Activated CD8-positive, alpha-beta T cell treated with anti-CD3 and anti-CD28 coated beads, Interleukin-2, amount 10 ng/mL, durations not matched to agents 7 days and 5 days (primary cell): ENCODE measurements at regions of chr11 and their contacts with region 1.

Region 1: GRCh38 chr11:45102810-45103621 is 43.4 kb upstream of the PRDM11 start:
- DNase-seq: peak; percentile 74
- ATAC-seq: peak; percentile 96
- H3K4me3 Mint-ChIP-seq: peak overlapping the region; percentile 62
- H3K27ac Mint-ChIP-seq: peak overlapping the region; percentile 84
- H3K4me1 Mint-ChIP-seq: peaks cover 11% of the 10 kb centered on the region
- H3K27me3 Mint-ChIP-seq: peaks cover 25% of the 10 kb centered on the region

Region 2: DNA sequence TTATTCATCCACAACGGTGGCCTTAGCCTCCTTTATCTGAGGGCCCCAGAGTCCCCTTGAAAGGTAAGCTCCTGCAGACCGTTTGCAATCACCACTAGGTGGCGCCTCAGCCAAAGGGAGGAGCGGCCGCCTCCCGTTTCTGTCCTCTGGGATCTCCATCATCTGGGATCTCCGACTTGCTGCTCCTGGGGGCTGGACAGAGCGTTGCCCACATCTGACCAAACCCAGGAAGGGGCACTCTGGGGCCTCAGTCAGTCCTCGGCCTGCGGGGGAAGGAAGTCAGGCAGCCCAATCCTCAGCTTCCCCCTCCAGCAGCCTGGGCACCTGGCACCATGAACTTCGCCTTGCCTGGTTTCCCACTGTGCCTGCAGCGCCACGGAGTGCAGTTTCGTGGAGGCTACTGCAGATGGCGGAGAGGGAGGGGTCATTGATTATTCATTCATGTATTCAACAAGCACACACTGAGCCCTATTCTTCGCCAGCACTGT is 175.8 kb before region 1 on chr11:
- CTCF ChIA-PET with region 1: interaction called, 299 read pairs
- POLR2A ChIA-PET with region 1: no interaction called
- DNase-seq: peak; percentile 65
- ATAC-seq: peak; percentile 65
- H3K4me3 Mint-ChIP-seq: no peak overlapping the region
- H3K27ac Mint-ChIP-seq: no peak overlapping the region
- H3K4me1 Mint-ChIP-seq: no peaks in the 10 kb centered on the region
- H3K27me3 Mint-ChIP-seq: no peaks in the 10 kb centered on the region

Region 3: GRCh38 chr11:44949160-44950030 is 153.6 kb before region 1 on chr11:
- CTCF ChIA-PET with region 1: interaction called, 61 read pairs
- POLR2A ChIA-PET with region 1: interaction called, 3 read pairs
- DNase-seq: peak; percentile 35
- ATAC-seq: peak; percentile 13
- H3K4me3 Mint-ChIP-seq: peak overlapping the region; percentile 46
- H3K27ac Mint-ChIP-seq: no peak overlapping the region
- H3K4me1 Mint-ChIP-seq: peaks cover 15% of the 10 kb centered on the region
- H3K27me3 Mint-ChIP-seq: peaks cover 18% of the 10 kb centered on the region

Region 4: GRCh38 chr11:44977476-44977984 is 125.5 kb before region 1 on chr11:
- CTCF ChIA-PET with region 1: interaction called, 11 read pairs
- POLR2A ChIA-PET with region 1: no interaction called
- DNase-seq: no peak
- ATAC-seq: no peak
- H3K4me3 Mint-ChIP-seq: no peak overlapping the region
- H3K27ac Mint-ChIP-seq: peak overlapping the region; percentile 10
- H3K4me1 Mint-ChIP-seq: peaks cover 19% of the 10 kb centered on the region
- H3K27me3 Mint-ChIP-seq: no peaks in the 10 kb centered on the region

Region 5: DNA sequence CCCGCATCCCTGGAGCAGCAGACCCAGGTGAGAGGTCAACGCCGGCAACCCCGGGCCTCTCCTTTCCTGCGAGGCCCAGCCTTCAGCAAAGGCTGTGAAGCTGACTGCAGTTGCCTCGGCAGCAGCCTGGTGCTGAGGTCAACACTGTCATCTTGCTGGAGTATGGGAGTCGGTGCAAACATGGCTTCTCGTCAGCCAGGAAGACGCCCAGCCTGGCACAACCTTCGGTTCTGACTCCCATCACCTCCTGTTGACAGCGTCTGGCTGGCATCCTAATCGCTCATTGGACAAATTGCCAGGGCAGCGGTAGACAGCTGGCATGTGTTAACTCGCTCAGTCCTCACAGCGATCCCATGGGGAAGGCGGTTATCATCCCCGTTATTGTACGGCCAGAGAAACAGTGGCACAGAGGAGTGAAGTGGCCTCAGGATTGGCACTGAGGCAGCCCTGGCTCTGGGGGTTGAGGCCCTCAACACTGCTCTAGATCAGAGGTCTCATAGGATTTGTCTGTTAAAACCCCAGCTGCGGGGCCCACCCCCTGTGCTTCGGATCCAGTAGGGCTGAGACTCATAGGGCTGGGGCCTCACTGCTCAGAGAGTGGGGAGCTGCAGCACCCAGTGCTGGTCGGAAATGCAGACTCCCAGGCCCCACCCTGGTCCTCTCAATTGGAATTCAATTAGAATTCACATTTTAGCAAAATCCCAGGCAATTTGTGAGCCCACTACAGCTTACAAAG is 113.0 kb before region 1 on chr11:
- CTCF ChIA-PET with region 1: no interaction called
- POLR2A ChIA-PET with region 1: no interaction called
- DNase-seq: no peak
- ATAC-seq: no peak
- H3K4me3 Mint-ChIP-seq: no peak overlapping the region
- H3K27ac Mint-ChIP-seq: no peak overlapping the region
- H3K4me1 Mint-ChIP-seq: no peaks in the 10 kb centered on the region
- H3K27me3 Mint-ChIP-seq: peaks cover 9% of the 10 kb centered on the region

Region 6: GRCh38 chr11:45089676-45090499 is 13.1 kb before region 1 on chr11:
- CTCF ChIA-PET with region 1: interaction called, 68 read pairs
- POLR2A ChIA-PET with region 1: no interaction called
- DNase-seq: no peak
- ATAC-seq: no peak
- H3K4me3 Mint-ChIP-seq: no peak overlapping the region
- H3K27ac Mint-ChIP-seq: no peak overlapping the region
- H3K4me1 Mint-ChIP-seq: peaks cover 26% of the 10 kb centered on the region
- H3K27me3 Mint-ChIP-seq: peaks cover 14% of the 10 kb centered on the region

Region 7: DNA sequence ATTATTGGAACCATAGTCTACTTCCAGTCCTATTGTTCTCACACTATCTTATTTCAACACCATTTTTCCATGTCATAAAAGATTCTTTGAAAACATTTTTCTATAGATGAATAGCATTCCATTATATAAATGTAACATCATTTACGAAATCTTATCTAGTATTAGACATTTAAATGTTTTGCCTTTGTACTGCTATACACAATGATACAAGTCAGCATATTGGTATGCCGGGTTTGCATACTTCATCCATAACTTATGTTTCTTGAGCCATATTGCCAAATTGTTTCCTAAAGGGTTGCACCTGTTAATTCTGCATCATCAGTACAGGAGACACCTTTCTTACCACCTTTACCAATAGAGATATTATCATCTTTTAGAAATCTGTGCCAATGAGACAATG is 115.0 kb after region 1 on chr11:
- CTCF ChIA-PET with region 1: no interaction called
- POLR2A ChIA-PET with region 1: no interaction called
- DNase-seq: no peak
- ATAC-seq: no peak
- H3K4me3 Mint-ChIP-seq: no peak overlapping the region
- H3K27ac Mint-ChIP-seq: no peak overlapping the region
- H3K4me1 Mint-ChIP-seq: peaks cover 18% of the 10 kb centered on the region
- H3K27me3 Mint-ChIP-seq: no peaks in the 10 kb centered on the region